ENCODE measurements at regions of chr6 and their contacts with region 1.

Region 1: DNA sequence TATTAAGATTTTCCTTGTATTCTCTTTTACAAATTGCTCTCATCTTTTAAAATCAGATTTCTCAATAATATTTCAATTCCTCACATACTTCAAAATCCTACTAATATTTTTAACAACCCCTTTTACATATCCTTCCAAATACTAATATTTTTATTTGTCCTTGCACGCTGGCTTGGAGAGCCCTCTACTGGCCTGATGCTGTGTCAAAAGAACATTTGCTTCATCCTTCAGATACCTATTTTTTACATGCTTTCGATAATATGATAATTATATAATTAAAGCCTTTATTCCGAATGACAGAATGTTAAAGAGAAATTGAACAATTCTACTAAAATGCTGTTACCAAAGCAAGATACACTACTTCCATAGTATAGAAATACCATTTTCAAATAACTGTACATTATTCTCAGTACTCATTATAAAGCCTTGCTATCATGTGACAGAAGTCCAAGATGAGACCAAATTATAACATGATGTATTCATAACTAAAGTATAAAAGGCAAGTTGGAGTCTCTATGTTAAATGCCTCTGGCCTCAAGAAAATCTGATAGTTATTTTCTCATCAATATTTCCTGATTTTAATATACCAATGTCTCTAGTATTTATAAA is 39.0 kb upstream of the PLN start:
- DNase-seq: no peak
- ATAC-seq: no peak

Region 2: DNA sequence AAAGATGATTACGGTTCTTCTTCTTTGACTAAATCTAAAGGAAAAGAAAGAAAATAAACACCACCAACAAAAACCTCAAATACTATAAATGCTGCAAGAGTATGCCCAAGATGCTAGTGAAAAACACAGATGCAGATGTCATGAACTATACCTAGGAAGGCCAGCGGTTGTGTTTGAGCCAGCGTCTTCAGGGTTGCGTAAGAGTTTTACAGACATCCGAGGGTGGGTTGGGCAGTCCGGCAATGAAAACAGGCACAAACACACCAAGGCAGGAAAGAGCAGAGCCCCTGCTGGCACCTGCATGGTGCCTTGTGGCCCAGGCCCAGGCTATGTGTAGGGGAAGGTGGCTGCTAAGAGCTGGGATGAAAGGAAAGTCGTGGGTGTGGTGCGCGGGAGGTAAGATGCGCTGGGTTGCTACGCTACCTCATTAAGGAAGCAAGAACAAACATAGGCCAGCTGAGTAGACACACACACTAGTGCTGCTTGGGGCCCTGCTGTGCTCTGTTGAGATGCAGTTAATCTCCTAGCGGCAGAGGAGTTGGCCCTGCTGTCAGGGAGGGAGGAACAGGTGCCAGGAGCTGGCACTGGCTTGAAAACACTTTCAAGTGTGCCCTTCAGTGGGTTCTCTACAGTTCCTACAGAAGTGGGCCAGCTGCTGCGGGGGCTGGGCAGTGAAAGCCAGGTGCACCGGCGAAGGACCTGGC is 131.2 kb before region 1 on chr6:
- intact Hi-C with region 1: loop called (anchors 2 kb)
- DNase-seq: peak; percentile 72
- ATAC-seq: peak; percentile 97